ENCODE measurements at regions of chr3 and their contacts with region 1.

Region 1: DNA sequence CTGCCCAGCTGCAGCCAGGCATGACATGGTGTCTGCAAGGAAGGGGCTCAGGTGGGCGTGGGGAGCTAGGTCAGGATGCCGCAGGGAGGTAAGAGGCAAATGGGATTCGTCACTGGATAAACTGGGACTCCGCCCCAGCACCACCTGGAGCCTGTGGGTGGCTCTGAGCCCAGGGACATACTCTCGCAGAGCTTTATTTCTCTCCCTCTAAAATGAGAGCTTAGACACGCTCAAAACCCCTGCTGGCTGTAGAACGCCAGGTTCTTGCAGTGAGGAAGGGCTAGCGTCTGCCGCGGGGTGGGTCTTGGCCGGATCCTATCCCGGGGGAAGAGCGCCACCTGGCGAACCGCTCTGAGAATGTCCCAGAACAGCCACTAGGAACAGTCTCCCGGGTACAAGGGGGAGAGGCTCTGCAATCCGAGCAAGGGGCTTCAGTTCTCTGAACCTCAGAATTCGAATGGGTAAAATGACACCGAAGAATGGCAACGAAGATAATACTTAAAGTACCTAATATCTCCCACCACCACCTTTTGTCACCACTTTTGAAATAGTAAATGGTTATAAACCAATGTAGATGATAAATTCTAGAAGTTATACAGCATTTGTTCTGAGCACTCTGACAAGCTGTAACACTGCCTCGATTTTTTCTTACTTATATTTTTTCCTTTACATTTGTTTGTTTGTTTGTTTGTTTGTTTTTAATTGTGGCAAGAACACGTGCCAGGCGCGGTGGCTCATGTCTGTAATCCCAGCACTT is 53.2 kb upstream of the SRGAP3 start:
- DNase-seq: peak; percentile 71 to 78 (median 74)
- H3K4me3 ChIP-seq: no peak overlapping the region
- H3K4me3 Mint-ChIP-seq: peak overlapping the region in 6 of 8 donors; percentile 47 to 74 (median 56)
- H3K27ac ChIP-seq: no peak overlapping the region
- H3K27ac Mint-ChIP-seq: no peak overlapping the region
- H3K4me1 ChIP-seq: peaks cover 7% of the 10 kb centered on the region
- H3K4me1 Mint-ChIP-seq: peaks cover 4 to 8% (median 5%) of the 10 kb centered on the region in 4 donors
- H3K27me3 ChIP-seq: no peaks in the 10 kb centered on the region
- H3K27me3 Mint-ChIP-seq: peaks cover 0 to 15% of the 10 kb centered on the region in 2 donors

Region 2: DNA sequence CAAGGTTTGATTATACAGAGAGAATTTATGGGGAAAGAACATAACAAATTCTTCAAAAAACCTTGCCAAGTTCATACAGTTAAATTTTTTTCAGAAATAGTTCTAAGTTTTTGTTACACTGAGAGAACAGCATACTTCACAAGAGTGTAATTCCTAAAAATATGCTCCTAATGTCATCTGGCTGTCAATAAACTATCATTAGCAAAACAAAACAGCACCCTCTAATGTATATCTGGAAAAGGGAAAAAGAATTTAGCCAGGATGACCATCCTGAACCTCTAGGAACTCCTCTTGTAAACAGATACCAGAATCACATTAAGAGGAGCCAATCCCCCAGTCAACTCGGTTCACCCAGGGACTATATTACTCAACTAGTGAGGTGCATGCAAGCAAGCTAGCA is 402.6 kb before region 1 on chr3:
- CTCF ChIA-PET with region 1: no interaction called
- POLR2A ChIA-PET with region 1: no interaction called
- intact Hi-C with region 1: no loop called
- DNase-seq: no peak
- H3K4me3 ChIP-seq: no peak overlapping the region
- H3K4me3 Mint-ChIP-seq: no peak overlapping the region
- H3K27ac ChIP-seq: no peak overlapping the region
- H3K27ac Mint-ChIP-seq: no peak overlapping the region
- H3K4me1 ChIP-seq: no peaks in the 10 kb centered on the region
- H3K4me1 Mint-ChIP-seq: no peaks in the 10 kb centered on the region
- H3K27me3 ChIP-seq: no peaks in the 10 kb centered on the region
- H3K27me3 Mint-ChIP-seq: no peaks in the 10 kb centered on the region

Region 3: GRCh38 chr3:8970971-8971589 is 331.5 kb before region 1 on chr3:
- CTCF ChIA-PET with region 1: interaction called, 227 read pairs
- POLR2A ChIA-PET with region 1: interaction called, 3 read pairs
- intact Hi-C with region 1: loop called (anchors 1 kb)
- DNase-seq: peak; percentile 68 to 78 (median 73)
- H3K4me3 ChIP-seq: no peak overlapping the region
- H3K4me3 Mint-ChIP-seq: peak overlapping the region in 3 of 8 donors; percentile 40 to 58 (median 41)
- H3K27ac ChIP-seq: no peak overlapping the region
- H3K27ac Mint-ChIP-seq: no peak overlapping the region
- H3K4me1 ChIP-seq: no peaks in the 10 kb centered on the region
- H3K4me1 Mint-ChIP-seq: peaks cover 2 to 5% (median 4%) of the 10 kb centered on the region in 4 donors
- H3K27me3 ChIP-seq: no peaks in the 10 kb centered on the region
- H3K27me3 Mint-ChIP-seq: peaks cover 8 to 12% of the 10 kb centered on the region in 2 donors

Region 4: GRCh38 chr3:8980756-8981257 is 321.8 kb before region 1 on chr3:
- CTCF ChIA-PET with region 1: interaction called, 227 read pairs
- POLR2A ChIA-PET with region 1: no interaction called
- intact Hi-C with region 1: no loop called
- DNase-seq: no peak
- H3K4me3 ChIP-seq: no peak overlapping the region
- H3K4me3 Mint-ChIP-seq: no peak overlapping the region
- H3K27ac ChIP-seq: no peak overlapping the region
- H3K27ac Mint-ChIP-seq: no peak overlapping the region
- H3K4me1 ChIP-seq: no peaks in the 10 kb centered on the region
- H3K4me1 Mint-ChIP-seq: no peaks in the 10 kb centered on the region
- H3K27me3 ChIP-seq: no peaks in the 10 kb centered on the region
- H3K27me3 Mint-ChIP-seq: peaks cover 12 to 22% of the 10 kb centered on the region in 2 donors

Region 5: DNA sequence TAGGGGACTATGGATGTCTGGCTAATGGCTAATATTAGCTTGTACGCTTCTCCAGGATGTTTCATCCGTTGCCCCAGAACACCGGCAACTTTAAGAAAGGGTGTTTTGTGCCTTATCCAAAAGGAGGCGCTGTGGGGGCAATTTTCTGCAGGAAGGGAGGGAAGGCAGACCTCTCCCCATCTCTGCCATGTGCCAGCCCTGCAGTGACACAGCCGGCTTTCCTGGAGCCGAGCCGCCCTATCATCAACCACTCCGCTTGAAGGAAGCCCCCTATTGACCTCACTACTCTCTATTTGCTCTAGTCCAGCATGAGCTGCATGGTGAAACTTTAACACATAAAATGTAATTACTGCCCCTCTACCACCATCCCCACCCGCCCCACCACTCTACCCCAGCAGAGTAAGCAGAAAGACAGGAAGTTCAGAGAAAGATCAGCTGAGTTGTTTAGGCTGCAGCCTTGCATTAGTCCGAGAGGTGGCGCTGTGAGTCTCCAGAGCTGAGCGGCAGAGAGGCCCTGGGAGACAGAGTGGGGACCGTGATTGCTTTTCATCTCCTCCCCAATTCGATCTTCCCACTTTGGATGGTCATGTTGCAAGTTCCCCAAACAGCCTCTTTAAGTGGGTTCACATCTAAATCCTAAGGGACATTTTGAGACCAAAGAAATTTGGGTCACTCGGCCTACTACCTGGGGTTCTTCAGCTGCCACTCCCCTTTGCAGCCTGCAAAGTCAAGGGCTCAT is 314.8 kb before region 1 on chr3:
- CTCF ChIA-PET with region 1: interaction called, 39 read pairs
- POLR2A ChIA-PET with region 1: no interaction called
- intact Hi-C with region 1: loop called (anchors 1 kb)
- DNase-seq: peak; percentile 38 to 58 (median 51)
- H3K4me3 ChIP-seq: no peak overlapping the region
- H3K4me3 Mint-ChIP-seq: peak overlapping the region in 7 of 8 donors; percentile 2 to 73 (median 61)
- H3K27ac ChIP-seq: no peak overlapping the region
- H3K27ac Mint-ChIP-seq: peak overlapping the region in 1 of 7 donors; percentile 10
- H3K4me1 ChIP-seq: no peaks in the 10 kb centered on the region
- H3K4me1 Mint-ChIP-seq: peaks cover 0 to 2% (median under 1%) of the 10 kb centered on the region in 4 donors
- H3K27me3 ChIP-seq: no peaks in the 10 kb centered on the region
- H3K27me3 Mint-ChIP-seq: peaks cover 0 to 2% of the 10 kb centered on the region in 2 donors

Region 6: DNA sequence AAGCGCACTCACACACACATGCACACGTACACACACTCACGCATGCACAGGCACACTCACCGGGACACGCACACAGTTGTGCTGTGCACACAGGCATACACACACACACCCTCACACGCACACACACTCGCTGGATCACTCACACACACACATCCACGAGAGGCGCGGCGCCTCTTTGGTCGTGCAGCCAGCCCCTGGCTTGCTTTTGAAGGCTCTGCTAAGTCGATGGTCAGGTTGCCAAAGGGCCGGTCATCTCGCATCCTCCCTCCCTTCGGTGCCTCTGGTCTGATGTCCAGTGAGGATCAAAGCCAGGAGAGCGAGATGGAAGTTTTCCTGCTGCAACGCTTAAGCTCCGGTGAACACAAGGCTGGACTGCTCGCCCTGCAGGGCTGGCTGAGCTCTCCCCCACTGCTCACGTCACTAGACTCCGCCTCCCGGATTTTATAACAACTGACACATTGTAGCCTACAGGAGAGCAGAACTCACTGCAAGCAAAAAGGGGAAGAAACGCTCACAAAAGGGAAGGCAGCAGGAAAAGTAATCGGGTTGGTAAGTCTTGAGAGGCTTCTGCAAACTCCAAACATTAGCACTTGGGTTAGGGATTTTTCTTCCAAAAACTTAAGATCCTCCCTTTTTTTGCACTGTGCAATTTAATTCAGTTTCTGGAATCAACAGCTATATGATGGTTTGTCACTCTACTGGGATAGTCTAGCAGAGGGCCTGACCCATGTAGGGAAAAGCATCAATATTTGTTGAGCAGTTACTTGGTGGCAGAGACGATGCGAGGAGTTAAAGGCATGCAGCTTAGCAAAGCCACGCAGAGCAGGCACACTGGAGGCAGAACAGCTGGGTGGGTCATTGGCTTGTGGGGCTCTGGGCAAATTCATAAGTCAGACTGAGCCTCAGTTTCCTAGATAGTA is 53.1 kb before region 1 on chr3 and contains the start of gene SRGAP3:
- CTCF ChIA-PET with region 1: interaction called, 11 read pairs
- POLR2A ChIA-PET with region 1: no interaction called
- intact Hi-C with region 1: loop called (anchors 2 kb)
- DNase-seq: peak; percentile 72 to 81 (median 77)
- H3K4me3 ChIP-seq: peak within 1 kb of the TSS; percentile 55 to 64
- H3K4me3 Mint-ChIP-seq: peak within 1 kb of the TSS; percentile 82 to 94 (median 90)
- H3K27ac ChIP-seq: no peak within 1 kb of the TSS
- H3K27ac Mint-ChIP-seq: peak within 1 kb of the TSS; percentile 17 to 81 (median 63)
- H3K4me1 ChIP-seq: peaks cover 20% of the 10 kb centered on the region
- H3K4me1 Mint-ChIP-seq: peaks cover 14 to 33% (median 19%) of the 10 kb centered on the region in 4 donors
- H3K27me3 ChIP-seq: no peaks in the 10 kb centered on the region
- H3K27me3 Mint-ChIP-seq: peaks cover 5 to 9% of the 10 kb centered on the region in 2 donors
- total RNA-seq, gene SRGAP3: 2.2 to 2.4 TPM

Region 7: GRCh38 chr3:9314796-9315195 is 12.2 kb after region 1 on chr3:
- CTCF ChIA-PET with region 1: interaction called, 26 read pairs
- POLR2A ChIA-PET with region 1: no interaction called
- intact Hi-C with region 1: no loop called
- DNase-seq: no peak
- H3K4me3 ChIP-seq: no peak overlapping the region
- H3K4me3 Mint-ChIP-seq: no peak overlapping the region
- H3K27ac ChIP-seq: no peak overlapping the region
- H3K27ac Mint-ChIP-seq: no peak overlapping the region
- H3K4me1 ChIP-seq: no peaks in the 10 kb centered on the region
- H3K4me1 Mint-ChIP-seq: no peaks in the 10 kb centered on the region
- H3K27me3 ChIP-seq: no peaks in the 10 kb centered on the region
- H3K27me3 Mint-ChIP-seq: peaks cover 3% of the 10 kb centered on the region in 2 donors

Region 8: GRCh38 chr3:9536212-9536611 is 233.6 kb after region 1 on chr3:
- CTCF ChIA-PET with region 1: no interaction called
- POLR2A ChIA-PET with region 1: no interaction called
- intact Hi-C with region 1: no loop called
- DNase-seq: no peak
- H3K4me3 ChIP-seq: no peak overlapping the region
- H3K4me3 Mint-ChIP-seq: no peak overlapping the region
- H3K27ac ChIP-seq: no peak overlapping the region
- H3K27ac Mint-ChIP-seq: no peak overlapping the region
- H3K4me1 ChIP-seq: no peaks in the 10 kb centered on the region
- H3K4me1 Mint-ChIP-seq: no peaks in the 10 kb centered on the region
- H3K27me3 ChIP-seq: no peaks in the 10 kb centered on the region
- H3K27me3 Mint-ChIP-seq: peaks cover 9 to 11% of the 10 kb centered on the region in 2 donors

Measured in CD4-positive, alpha-beta memory T cell (primary cell).